ENCODE measurements at regions of chr3 and their contacts with region 1.

Region 1: DNA sequence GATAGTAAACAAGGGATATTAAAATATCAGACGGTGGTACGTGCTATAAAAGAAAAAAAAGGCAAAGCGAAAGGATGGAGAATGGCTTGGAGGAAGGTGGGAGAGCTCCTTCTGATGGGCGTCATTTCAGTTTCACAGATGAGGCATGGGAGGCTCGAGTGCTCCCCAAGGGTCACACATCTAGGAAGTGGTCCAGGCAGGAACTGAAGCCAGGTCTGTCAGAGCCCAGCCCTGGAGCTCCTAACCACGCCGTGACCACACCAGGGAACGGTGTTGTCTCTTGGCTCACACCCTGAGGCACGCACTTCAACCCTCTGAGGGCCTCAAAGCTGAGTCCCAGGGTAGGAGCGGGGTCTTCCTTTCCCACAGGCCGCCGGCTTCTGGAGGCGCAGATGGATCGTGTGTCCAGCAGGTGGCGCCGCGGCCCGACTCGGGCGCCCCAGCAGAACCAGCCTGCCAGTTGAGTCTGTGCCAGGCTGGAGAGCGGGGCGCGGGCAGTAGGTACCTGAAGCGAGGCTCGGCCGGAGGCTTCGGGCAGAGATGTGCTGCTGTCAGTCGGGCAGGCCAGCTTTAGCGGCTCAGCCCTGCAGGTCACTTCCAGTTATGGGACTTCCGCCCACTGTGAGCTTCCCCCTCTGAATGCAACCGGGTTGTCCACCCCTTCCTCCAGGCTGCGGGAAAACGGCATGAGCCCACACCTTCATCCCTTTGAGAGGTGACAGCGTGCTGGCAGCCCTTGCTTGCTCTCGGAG is 68.1 kb downstream of the SLC6A1 start:
- DNase-seq: peak; percentile 44 to 69 (median 54)
- ATAC-seq: peak; percentile 38
- H3K4me3 ChIP-seq: no peak overlapping the region
- H3K27ac ChIP-seq: no peak overlapping the region
- H3K4me1 ChIP-seq: peaks cover 7% of the 10 kb centered on the region
- H3K27me3 ChIP-seq: no peaks in the 10 kb centered on the region
- CTCF ChIP-seq: peak; percentile 39 to 78 (median 58)
- POLR2A ChIP-seq: no peak

Region 2: DNA sequence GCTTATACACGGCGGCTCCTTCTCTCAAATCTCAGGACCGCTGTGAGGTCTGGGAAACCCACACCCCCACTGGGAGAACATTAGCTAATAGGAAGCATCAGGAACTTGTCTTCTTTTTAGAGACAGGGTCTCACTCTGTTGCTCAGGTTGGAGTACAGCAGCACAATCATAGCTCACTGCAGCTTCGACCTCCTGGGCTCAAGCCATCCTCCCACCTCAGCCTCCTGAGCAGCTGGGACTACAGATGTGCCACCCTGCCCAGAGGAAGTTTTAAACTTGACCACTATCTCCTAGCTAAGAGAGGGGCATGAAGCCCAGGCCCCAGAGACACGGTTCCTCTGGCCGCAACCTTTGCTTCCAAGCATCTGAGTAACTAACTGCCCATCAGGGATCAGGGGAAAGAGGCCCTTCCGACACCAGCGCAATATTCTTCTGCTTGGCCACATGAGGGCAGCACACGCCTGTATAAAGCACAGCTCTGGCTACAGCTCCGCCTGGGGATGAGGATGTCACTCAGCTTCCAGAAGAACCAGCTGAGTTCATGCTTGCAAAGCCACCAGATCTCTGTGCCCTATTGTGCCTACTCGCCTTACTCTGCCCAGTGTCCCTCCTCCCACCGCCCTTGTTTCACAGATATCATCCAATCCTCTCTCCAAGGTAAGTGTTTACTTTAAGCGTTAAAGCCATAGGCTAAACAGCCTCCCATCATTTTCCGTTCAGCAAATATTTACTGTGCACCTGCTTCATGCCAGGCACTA is 302.2 kb before region 1 on chr3:
- intact Hi-C with region 1: loop called (anchors 5 kb)
- DNase-seq: peak; percentile 51 to 65 (median 57)
- ATAC-seq: peak; percentile 78
- H3K4me3 ChIP-seq: no peak overlapping the region
- H3K27ac ChIP-seq: no peak overlapping the region
- H3K4me1 ChIP-seq: no peaks in the 10 kb centered on the region
- H3K27me3 ChIP-seq: no peaks in the 10 kb centered on the region
- CTCF ChIP-seq: peak; percentile 50 to 81 (median 74)
- POLR2A ChIP-seq: no peak

Region 3: GRCh38 chr3:10945683-10946287 is 114.9 kb before region 1 on chr3:
- intact Hi-C with region 1: loop called (anchors 5 kb)
- DNase-seq: peak; percentile 38 to 64 (median 46)
- ATAC-seq: no peak
- H3K4me3 ChIP-seq: no peak overlapping the region
- H3K27ac ChIP-seq: no peak overlapping the region
- H3K4me1 ChIP-seq: no peaks in the 10 kb centered on the region
- H3K27me3 ChIP-seq: no peaks in the 10 kb centered on the region
- CTCF ChIP-seq: peak; percentile 48 to 82 (median 58)
- POLR2A ChIP-seq: no peak

Region 4: GRCh38 chr3:11221818-11222415 is 161.2 kb after region 1 on chr3:
- intact Hi-C with region 1: no loop called
- DNase-seq: no peak
- ATAC-seq: no peak
- H3K4me3 ChIP-seq: no peak overlapping the region
- H3K27ac ChIP-seq: no peak overlapping the region
- H3K4me1 ChIP-seq: peaks cover 5% of the 10 kb centered on the region
- H3K27me3 ChIP-seq: no peaks in the 10 kb centered on the region
- CTCF ChIP-seq: no peak
- POLR2A ChIP-seq: no peak

Region 5: DNA sequence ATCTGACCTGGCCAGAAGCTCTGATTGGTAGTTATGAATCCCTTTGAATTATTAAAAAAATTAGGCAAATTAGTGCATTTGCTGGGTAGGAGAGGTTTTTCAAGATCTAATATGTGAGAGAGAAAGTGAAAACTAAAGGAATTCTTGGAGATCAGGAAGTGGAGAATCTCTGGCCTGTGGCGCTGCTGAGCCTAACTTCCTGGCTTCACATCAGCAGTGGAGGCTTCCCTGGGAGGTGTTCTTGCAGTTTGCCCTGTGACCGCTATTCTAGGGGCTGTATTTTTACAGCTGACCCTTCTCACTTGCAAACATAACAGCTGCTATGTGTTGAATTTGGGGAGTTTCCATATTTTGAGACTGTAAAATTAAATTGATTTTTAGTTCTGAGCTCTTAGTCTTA is 378.0 kb after region 1 on chr3:
- intact Hi-C with region 1: no loop called
- DNase-seq: no peak
- ATAC-seq: no peak
- H3K4me3 ChIP-seq: no peak overlapping the region
- H3K27ac ChIP-seq: no peak overlapping the region
- H3K4me1 ChIP-seq: peaks cover 9% of the 10 kb centered on the region
- H3K27me3 ChIP-seq: no peaks in the 10 kb centered on the region
- CTCF ChIP-seq: no peak
- POLR2A ChIP-seq: no peak